Right ventricle myocardium inferior (tissue), 1 donor: ENCODE measurements at regions of chr10 and their contacts with region 1.

Region 1: DNA sequence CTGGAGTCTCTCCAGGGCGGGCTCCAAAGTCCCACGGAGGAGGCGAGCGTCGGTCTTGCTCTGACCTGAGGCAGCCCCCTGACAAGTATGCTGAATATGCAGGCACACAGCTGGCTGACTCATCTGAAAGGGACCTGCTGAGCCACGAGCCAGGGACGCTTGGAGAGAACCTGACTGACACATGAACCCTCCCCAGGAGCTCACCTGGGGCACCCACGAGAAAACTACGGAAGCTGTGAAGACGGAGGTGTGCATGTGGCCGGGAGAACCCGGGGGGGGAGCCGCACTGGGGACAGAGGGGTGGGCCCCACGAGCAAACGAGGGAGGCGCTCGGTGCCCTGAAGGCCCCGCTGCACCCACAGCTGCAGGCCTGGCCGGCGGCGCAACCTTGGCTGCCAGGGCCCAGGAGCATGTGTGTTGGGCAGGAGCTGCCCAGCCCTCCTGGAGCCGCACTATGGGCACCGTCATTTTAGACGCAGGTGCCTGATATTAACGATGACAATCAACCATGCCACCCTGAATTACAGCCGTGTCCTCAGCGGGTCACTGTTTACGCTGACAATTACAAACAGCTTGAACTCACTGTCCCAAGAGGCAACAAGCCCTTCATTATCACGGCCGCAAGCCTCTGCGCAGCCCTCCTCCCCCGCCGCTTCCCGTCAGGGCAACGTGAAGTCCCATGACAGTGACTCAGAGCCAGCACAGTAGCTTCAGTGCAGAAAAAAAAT is 64.7 kb downstream of the DIP2C start:
- DNase-seq: no peak
- ATAC-seq: peak; percentile 85

Region 2: DNA sequence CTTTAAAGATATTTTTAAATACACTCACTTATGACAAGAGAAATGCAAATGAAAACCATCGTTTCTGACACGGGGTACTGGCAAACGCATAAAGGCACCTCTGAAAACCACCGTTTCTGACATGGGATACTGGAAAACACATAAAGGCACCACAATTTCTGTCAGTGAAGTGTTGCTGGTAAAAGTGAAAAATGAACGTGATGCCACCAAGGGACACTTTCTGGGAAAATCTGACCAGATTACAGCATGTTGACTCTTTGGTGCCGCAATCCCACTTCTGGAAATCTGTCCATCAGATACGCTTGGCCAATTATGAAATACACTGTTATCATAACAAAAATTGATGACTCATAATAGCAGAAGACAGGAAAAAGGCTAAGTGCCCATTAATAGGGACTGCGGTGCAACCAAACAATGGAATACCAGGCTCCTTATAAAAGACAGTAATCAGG is 357.8 kb before region 1 on chr10:
- intact Hi-C with region 1: no loop called
- DNase-seq: no peak
- ATAC-seq: no peak

Region 3: DNA sequence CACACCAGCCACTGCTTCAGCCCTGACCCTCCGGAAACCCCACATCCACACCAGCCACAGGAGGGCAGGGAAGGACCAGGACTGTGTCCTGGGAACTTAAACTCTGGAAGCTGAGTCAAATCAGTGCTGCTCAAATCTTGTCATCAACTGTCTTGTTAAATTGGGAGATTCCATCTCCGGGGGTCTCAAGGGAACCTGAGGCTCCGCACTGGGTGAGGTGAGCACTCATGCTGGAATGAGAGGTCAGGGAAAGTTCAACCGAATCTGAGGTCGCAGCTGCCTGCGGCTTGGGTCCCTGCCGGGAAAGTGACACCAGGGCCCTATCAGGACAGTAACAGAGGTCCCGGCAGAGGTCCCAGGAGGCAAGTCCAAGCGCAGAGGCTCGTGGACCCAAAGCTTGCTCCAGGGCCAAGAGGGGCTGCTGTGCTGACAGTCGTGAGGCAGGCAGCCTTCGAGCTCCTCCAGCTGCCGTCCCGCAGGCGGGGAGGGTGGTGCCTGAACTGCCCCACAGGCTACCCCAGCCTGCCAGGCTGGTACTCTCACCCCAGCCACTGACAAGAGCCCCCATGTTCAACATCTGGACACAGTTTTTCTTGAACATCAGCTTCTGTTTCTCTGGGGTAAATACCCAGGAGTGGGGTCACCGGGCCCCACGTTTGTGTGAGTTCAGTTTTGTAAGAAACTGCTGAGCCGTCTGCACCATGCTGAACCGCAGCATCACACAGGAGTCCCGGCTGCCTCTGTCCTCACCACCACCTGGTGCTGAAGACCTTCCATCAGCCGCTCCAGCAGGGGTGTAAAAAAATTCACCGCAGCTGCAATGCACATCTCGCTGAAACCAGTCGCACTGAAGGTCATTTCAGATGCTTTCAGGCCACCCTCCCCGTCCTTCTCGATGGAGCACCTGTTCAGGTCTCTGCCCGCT is 36.3 kb before region 1 on chr10:
- intact Hi-C with region 1: loop called (anchors 1 kb)
- DNase-seq: no peak
- ATAC-seq: peak; percentile 77

Region 4: GRCh38 chr10:659688-660141 is 34.9 kb after region 1 on chr10:
- intact Hi-C with region 1: loop called (anchors 2 kb)
- DNase-seq: no peak
- ATAC-seq: no peak